PC-9 (cell line): ENCODE measurements at regions of chr17 and their contacts with region 1.

Region 1: GRCh38 chr17:50783193-50783660 is 15.9 kb upstream of the ANKRD40CL start:
- DNase-seq: peak; percentile 76 to 86
- H3K4me3 ChIP-seq: no peak overlapping the region
- H3K27ac ChIP-seq: no peak overlapping the region
- H3K4me1 ChIP-seq: no peaks in the 10 kb centered on the region
- H3K27me3 ChIP-seq: no peaks in the 10 kb centered on the region
- CTCF ChIP-seq: peak; percentile 100

Region 2: GRCh38 chr17:50626037-50626574 is 157.1 kb before region 1 on chr17:
- CTCF ChIA-PET with region 1: no interaction called
- POLR2A ChIA-PET with region 1: no interaction called
- intact Hi-C with region 1: no loop called
- DNase-seq: peak; percentile 50 to 52
- H3K4me3 ChIP-seq: no peak overlapping the region
- H3K27ac ChIP-seq: no peak overlapping the region
- H3K4me1 ChIP-seq: peaks cover 31% of the 10 kb centered on the region
- H3K27me3 ChIP-seq: no peaks in the 10 kb centered on the region
- CTCF ChIP-seq: peak; percentile 91

Region 3: DNA sequence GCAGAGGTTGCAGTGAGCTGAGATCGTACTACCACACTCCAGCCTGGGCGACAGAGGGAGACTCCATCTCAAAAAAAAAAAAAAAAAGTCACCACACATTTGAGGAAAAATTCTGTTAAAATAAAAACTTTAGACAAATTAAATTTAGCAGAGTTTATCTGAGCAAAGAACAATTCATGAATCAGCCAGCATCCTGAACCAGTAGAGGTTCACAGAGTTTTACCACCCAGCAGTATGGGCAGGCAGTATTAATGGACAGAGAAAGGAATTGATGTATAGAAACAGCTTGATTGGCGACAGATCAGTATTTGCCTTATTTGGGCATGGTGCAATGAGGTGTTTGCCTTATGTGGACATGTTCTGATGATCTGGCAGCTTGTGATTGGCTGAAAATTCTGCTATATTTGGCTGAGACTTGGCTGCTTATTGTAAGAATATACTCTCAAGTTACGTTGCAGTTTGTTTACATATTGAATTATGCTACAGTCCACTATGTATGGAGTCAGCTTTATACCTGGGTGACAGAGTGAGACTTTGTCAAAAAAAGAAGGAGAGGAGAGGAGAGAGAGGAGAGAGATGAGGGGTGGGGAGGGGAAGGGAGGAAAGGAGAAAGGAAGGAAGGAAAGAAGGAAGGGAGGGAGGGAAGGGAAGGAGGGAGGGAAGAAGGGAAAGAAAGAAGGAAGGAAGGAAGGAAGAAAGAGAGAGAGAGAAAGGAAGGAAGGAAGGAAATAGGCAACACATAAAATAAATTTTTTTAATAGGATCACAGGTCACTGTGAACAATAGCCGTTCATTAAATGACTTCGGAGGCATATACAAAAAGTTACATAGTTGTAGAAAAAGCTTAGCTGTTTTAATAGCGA is 134.0 kb before region 1 on chr17:
- CTCF ChIA-PET with region 1: no interaction called
- POLR2A ChIA-PET with region 1: interaction called, 13 read pairs
- intact Hi-C with region 1: no loop called
- DNase-seq: peak in 1 of 2 experiments; percentile 80
- H3K4me3 ChIP-seq: no peak overlapping the region
- H3K27ac ChIP-seq: peak overlapping the region; percentile 38
- H3K4me1 ChIP-seq: 0 out of 2 replicates have a peak, but pooled peaks cover 12% of the 10 kb centered on the region
- H3K27me3 ChIP-seq: no peaks in the 10 kb centered on the region
- CTCF ChIP-seq: no peak

Region 4: GRCh38 chr17:50841949-50842354 is 58.7 kb after region 1 on chr17:
- CTCF ChIA-PET with region 1: interaction called, 13 read pairs
- POLR2A ChIA-PET with region 1: no interaction called
- intact Hi-C with region 1: loop called (anchors 1 kb)
- DNase-seq: peak; percentile 43 to 76
- H3K4me3 ChIP-seq: no peak overlapping the region
- H3K27ac ChIP-seq: no peak overlapping the region
- H3K4me1 ChIP-seq: peaks cover 18% of the 10 kb centered on the region
- H3K27me3 ChIP-seq: no peaks in the 10 kb centered on the region
- CTCF ChIP-seq: peak; percentile 83

Region 5: GRCh38 chr17:50956750-50957523 is 173.7 kb after region 1 on chr17:
- CTCF ChIA-PET with region 1: no interaction called
- POLR2A ChIA-PET with region 1: no interaction called
- intact Hi-C with region 1: loop called (anchors 2 kb)
- DNase-seq: peak; percentile 39 to 58
- H3K4me3 ChIP-seq: no peak overlapping the region
- H3K27ac ChIP-seq: no peak overlapping the region
- H3K4me1 ChIP-seq: peaks cover 13% of the 10 kb centered on the region
- H3K27me3 ChIP-seq: no peaks in the 10 kb centered on the region
- CTCF ChIP-seq: peak; percentile 84

Region 6: DNA sequence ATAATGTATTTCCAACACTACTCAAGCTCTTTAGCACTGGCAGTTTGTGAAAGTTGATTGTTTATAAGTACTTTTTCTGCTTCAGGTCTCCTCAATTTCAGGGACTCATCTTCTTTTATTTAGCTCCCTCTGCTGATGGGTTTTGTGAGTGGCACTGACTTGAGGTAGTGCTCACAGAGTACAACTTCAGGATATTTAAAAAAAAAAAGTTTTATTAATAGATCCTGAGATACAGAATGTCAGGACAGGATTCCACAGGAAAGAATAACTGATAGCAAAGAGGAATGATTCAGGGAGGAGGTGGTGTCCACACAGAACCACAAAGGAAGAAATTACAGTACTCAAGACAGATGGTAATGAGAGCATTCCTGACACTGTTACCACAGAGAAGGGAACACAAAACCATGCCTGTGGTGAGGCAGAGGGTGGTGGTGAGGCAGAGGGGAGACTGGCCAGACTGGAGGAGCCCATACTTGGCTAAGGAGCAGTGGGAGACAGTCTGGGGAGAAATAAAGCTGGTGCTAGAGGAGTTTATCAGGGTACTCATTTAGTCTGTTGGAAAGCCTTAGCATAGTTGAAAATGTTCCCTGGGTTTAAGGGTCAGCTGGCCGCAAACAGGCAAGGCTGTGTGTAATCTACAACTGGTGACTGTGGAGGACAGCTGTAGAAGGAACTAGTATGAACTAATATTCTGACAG is 273.7 kb after region 1 on chr17:
- CTCF ChIA-PET with region 1: no interaction called
- POLR2A ChIA-PET with region 1: interaction called, 4 read pairs
- intact Hi-C with region 1: loop called (anchors 1 kb)
- DNase-seq: peak; percentile 23 to 58
- H3K4me3 ChIP-seq: no peak overlapping the region
- H3K27ac ChIP-seq: peak overlapping the region; percentile 29; the same call in 1 of the 2 replicates
- H3K4me1 ChIP-seq: peaks cover 18% of the 10 kb centered on the region
- H3K27me3 ChIP-seq: no peaks in the 10 kb centered on the region
- CTCF ChIP-seq: peak; percentile 82